Activated CD4-positive, alpha-beta T cell treated with anti-CD3 and anti-CD28 coated beads, Interleukin-2, amount 10 ng/mL, durations not matched to agents 24 days and 14 days (primary cell): ENCODE measurements at regions of chr4 and their contacts with region 1.

Region 1: DNA sequence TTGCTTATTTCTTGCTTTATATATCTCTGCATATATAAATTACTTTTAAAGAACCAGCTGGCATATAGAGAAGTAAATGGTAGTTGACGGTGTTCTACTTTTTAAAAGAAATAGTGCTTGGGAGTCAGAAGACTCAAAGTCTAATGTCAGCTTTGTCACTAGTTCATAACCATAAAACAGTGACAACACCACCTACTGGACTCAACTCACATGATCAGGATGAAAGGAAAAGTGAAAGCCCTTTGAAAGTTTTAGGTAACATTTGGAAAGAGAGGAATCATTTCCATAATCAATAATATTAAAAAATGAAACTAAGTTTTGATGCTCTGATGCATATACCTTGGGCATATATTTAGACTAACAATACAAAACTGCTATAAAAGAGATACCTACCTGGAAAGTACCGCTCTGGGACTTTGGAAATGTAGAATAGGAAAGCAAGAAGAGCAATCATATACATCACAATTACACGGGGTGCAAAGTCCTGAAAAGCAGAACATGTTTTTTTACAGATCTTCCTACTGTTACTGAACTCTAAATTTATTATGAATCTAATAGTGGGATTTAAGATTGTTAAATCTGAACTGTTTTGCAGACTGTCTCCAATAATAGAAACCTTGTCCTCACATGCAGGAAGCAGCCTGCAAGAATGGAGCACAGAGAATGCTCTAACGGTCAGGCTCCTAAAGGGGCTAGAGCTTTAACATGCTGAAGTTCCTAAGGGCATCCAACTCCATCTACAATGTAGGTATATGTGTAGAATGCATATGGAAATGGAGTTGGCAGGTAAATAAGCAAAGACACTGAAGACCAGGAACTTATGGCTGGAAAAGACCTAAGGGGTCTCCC is 15.6 kb downstream of the PAQR3 start:
- DNase-seq: no peak
- H3K4me3 Mint-ChIP-seq: no peak overlapping the region
- H3K27ac Mint-ChIP-seq: no peak overlapping the region
- H3K4me1 Mint-ChIP-seq: peaks cover 7% of the 10 kb centered on the region
- H3K27me3 Mint-ChIP-seq: no peaks in the 10 kb centered on the region

Region 2: GRCh38 chr4:77852892-77853495 is 1070.7 kb before region 1 on chr4:
- intact Hi-C with region 1: no loop called
- DNase-seq: peak; percentile 93
- H3K4me3 Mint-ChIP-seq: peak overlapping the region; percentile 85
- H3K27ac Mint-ChIP-seq: peak overlapping the region; percentile 99
- H3K4me1 Mint-ChIP-seq: peaks cover 51% of the 10 kb centered on the region
- H3K27me3 Mint-ChIP-seq: no peaks in the 10 kb centered on the region

Region 3: DNA sequence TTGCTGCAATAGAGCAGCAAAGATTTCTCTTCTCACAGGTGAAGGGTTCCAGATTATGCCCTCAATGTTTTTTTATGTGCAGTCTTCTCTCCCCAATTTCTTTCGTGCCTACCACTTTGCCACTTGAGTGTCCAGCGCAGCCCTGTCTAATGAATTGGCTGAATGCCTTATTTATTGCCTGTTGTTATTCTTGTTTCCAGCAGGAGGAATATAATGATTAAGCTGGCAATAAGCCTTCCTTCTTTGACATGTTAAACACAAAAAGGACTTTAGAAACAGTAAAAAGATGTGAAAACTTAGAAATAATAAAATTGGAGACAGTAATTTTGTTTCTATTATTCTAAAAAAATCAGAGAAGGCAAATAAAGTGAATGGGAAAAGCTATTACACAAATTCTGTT is 901.2 kb before region 1 on chr4:
- intact Hi-C with region 1: no loop called
- DNase-seq: no peak
- H3K4me3 Mint-ChIP-seq: no peak overlapping the region
- H3K27ac Mint-ChIP-seq: no peak overlapping the region
- H3K4me1 Mint-ChIP-seq: no peaks in the 10 kb centered on the region
- H3K27me3 Mint-ChIP-seq: peaks cover 10% of the 10 kb centered on the region

Region 4: DNA sequence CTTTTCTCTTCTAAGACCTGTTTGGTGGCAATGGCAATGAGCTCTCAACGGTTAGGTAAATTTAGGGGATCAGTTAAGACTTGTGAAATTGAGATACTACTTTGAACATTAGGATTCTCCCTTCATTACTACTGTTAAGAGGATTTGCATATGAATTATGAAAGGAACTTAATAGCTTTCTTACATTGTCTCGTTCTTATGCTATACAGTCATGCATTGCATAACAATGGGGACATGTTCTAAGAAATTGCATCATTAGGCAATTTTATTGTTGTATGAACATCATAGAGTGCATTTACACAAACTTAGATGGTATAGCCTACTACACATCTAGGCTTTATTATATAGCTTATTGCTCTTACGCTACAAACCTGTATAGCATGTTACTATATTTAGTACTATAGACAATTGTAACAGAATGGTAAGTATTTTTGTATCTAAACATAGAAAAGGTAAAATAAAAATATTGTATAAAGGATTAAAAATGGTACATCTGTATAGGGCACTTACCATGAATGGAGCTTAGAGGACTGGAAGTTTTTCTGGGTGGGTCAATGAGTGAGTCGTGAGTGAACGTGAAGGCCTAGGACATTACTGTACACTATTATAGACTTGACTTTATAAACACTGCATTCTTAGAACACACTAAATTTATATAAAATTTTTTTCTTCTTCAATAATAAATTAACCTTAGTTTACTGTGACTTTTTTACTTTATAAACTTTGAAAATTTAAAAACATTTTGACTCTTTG is 46.9 kb before region 1 on chr4:
- intact Hi-C with region 1: loop called (anchors 5 kb)
- DNase-seq: no peak
- H3K4me3 Mint-ChIP-seq: no peak overlapping the region
- H3K27ac Mint-ChIP-seq: no peak overlapping the region
- H3K4me1 Mint-ChIP-seq: no peaks in the 10 kb centered on the region
- H3K27me3 Mint-ChIP-seq: no peaks in the 10 kb centered on the region

Region 5: DNA sequence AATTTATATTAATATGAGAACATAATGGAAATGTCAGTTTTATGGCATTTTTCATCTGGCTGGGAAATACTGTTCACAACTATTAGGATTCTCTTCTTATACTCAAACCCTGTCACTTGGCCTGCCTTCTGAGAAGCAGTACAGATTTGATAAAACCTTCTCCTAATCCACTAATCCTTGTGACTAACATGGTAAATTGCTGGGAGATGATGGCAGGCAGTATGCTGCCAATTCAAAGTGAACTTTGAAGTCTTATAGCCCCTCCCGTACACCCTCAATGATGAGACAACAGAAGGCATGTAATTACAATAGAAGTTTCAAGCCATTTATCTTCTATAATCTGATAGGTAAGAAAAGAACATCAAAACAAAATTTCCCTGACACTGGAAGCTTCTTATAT is 21.4 kb before region 1 on chr4:
- intact Hi-C with region 1: no loop called
- DNase-seq: no peak
- H3K4me3 Mint-ChIP-seq: no peak overlapping the region
- H3K27ac Mint-ChIP-seq: no peak overlapping the region
- H3K4me1 Mint-ChIP-seq: no peaks in the 10 kb centered on the region
- H3K27me3 Mint-ChIP-seq: no peaks in the 10 kb centered on the region